ENCODE measurements at regions of chr2 and their contacts with region 1.

Region 1: DNA sequence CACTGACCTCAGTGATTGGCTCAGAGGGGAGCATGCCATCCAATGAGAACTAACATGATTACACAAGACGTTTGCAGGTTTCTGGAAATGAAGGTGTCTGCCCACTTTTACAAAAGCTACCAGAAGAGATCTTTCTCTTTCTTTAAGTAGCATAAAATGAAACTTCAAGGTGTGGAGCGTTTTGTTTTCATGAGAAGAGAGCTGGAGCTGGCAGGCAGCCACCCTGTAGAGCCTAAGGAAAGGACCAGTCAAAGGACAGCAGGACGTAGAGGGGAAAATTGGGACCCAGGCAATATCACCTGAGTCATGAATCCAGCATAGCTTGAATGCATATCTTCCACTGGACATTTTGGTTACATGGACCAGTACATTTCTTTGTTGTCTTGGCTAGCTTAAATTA is 331.0 kb downstream of the EPHA4 start:
- DNase-seq: no peak
- H3K27ac ChIP-seq: no peak overlapping the region
- CTCF ChIP-seq: no peak

Region 2: GRCh38 chr2:221050020-221050795 is 190.9 kb before region 1 on chr2:
- CTCF ChIA-PET with region 1: no interaction called
- POLR2A ChIA-PET with region 1: no interaction called
- DNase-seq: no peak
- H3K27ac ChIP-seq: no peak overlapping the region
- CTCF ChIP-seq: no peak

Region 3: GRCh38 chr2:221442128-221442527 is 201.1 kb after region 1 on chr2:
- CTCF ChIA-PET with region 1: interaction called, 11 read pairs
- POLR2A ChIA-PET with region 1: no interaction called
- DNase-seq: no peak
- H3K27ac ChIP-seq: no peak overlapping the region
- CTCF ChIP-seq: no peak

Measured in RWPE1 (cell line).